SK-N-SH (cell line): ENCODE measurements at regions of chr1 and their contacts with region 1.

Region 1: DNA sequence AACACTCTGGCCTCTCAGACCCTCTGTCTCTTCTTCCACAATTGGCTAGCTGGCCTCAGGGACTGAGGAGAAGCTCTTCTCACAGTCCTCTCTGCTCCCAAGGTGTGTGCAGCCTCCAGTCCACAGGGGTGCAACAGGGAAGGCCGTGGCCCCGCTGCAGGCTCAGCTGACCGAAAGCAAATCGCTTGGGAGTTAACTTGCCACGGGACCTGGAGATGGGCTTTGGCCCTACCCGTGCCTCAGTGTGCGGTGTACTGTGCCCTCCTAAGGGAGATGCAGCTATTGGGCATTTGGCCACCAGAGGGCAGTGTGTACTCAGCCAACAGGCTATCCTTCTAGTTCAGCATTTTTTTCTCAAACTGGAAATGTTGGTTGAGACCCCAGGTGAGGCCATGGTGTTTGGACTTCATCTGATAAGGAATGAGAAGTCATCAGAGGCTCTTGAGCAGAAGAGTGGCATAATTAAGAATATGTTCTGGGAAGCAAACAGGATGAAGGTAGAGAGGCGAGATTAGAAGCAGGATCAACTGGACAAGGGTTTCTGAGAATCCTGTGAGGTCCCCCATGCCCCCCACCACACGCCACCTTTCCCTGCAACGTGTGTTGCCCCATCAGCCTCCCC is 42.5 kb upstream of the TMEM125 start:
- DNase-seq: peak; percentile 79
- H3K4me3 ChIP-seq: no peak overlapping the region; a peak in 1 of 4 replicates
- H3K27ac ChIP-seq: no peak overlapping the region
- H3K4me1 ChIP-seq: peaks cover 0 to under 1% of the 10 kb centered on the region in 2 experiments; a peak in 1 of 4 replicates
- H3K27me3 ChIP-seq: no peaks in the 10 kb centered on the region
- CTCF ChIP-seq: peak; percentile 94
- EP300 ChIP-seq: no peak
- RAD21 ChIP-seq: peak; percentile 97

Region 2: GRCh38 chr1:43238085-43238484 is 10.8 kb after region 1 on chr1:
- CTCF ChIA-PET with region 1: interaction called, 11 read pairs
- POLR2A ChIA-PET with region 1: no interaction called
- DNase-seq: peak; percentile 51
- H3K4me3 ChIP-seq: no peak overlapping the region; a peak in 1 of 4 replicates
- H3K27ac ChIP-seq: no peak overlapping the region
- H3K4me1 ChIP-seq: peaks cover 0 to 6% of the 10 kb centered on the region in 2 experiments; a peak in 1 of 4 replicates
- H3K27me3 ChIP-seq: no peaks in the 10 kb centered on the region
- CTCF ChIP-seq: peak; percentile 60
- EP300 ChIP-seq: no peak
- RAD21 ChIP-seq: peak; percentile 76

Region 3: GRCh38 chr1:43389326-43390313 is 162.4 kb after region 1 on chr1 and contains the starts of genes MED8 and SZT2:
- CTCF ChIA-PET with region 1: interaction called, 17 read pairs
- POLR2A ChIA-PET with region 1: interaction called, 4 read pairs
- DNase-seq: peak; percentile 97
- H3K4me3 ChIP-seq: peak within 1 kb of the TSS; percentile 82 to 83
- H3K27ac ChIP-seq: peak within 1 kb of the TSS; percentile 72 to 79; a peak in 3 of 4 replicates
- H3K4me1 ChIP-seq: peaks cover 15 to 19% of the 10 kb centered on the region in 2 experiments; a peak in 3 of 4 replicates
- H3K27me3 ChIP-seq: no peaks in the 10 kb centered on the region
- CTCF ChIP-seq: no peak
- EP300 ChIP-seq: no peak
- RAD21 ChIP-seq: no peak
- polyA plus RNA-seq, gene MED8: 33.7 and 42.9 TPM in 2 replicates
- polyA plus RNA-seq, gene SZT2: 11.1 and 12.9 TPM in 2 replicates

Region 4: DNA sequence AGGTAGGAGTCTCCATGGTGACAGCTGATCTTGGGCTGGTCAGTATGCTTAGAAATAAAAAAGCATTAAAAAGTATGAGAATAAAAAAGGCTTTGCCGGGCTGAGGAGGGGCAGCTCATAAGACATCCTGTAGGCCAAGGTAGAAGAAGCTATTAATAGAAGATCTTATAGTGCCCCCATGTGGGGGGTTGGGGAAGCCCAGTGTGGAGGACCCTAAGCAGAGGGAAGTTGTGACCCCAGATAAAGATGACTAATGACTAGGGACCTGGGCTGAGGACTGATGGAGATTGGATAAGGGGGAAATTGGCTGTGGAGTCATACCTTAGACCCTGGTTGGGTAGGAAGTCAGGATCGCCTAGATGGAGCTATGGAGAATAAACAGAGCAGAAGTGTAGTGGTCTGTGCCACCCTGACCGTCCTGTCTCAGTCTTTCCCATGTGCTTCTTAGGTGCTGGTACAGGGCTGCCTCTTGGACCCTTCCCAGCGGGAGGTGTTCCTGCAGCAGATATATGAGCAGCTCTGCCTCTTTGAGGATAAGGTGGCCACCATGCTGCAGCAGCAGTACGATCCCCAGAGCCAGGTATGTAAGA is 187.5 kb after region 1 on chr1:
- CTCF ChIA-PET with region 1: interaction called, 134 read pairs
- POLR2A ChIA-PET with region 1: interaction called, 6 read pairs
- DNase-seq: peak; percentile 72
- H3K4me3 ChIP-seq: no peak overlapping the region; a peak in 1 of 4 replicates
- H3K27ac ChIP-seq: no peak overlapping the region
- H3K4me1 ChIP-seq: no peaks in the 10 kb centered on the region
- H3K27me3 ChIP-seq: no peaks in the 10 kb centered on the region
- CTCF ChIP-seq: peak; percentile 73
- EP300 ChIP-seq: no peak
- RAD21 ChIP-seq: peak; percentile 74